Mammary epithelial cell (primary cell): ENCODE measurements at regions of chr5 and their contacts with region 1.

Region 1: DNA sequence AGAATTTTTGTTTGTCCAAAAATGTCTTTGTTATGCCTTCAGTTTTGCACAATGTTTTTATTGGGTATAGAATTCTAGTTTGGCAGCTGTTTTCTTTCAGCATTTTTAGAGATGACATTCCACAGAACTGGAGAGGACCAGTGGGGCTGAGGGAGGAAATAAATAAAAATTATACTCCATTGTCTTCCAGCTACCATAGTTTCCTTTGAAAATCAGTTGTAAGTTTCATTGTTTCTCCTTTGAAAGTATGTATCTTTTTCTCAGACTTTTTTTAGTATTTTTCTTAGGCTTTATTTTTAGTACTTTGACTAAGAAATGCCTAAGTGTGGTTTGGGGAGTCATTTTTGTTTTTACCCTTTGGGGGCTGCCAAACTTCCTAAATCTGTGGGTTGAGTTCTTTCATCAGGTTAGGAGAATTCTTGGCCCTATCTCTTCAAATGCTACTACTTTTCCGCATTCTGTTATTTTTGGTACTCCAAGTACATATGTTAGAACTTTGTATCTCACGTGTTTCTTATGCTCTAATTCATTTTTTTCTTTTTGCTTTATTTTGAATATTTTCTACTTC is 15.2 kb upstream of the FBLL1 start:
- DNase-seq: no peak
- H3K4me3 ChIP-seq: no peak overlapping the region
- H3K27ac ChIP-seq: no peak overlapping the region
- H3K4me1 ChIP-seq: no peaks in the 10 kb centered on the region
- H3K27me3 ChIP-seq: no peaks in the 10 kb centered on the region
- CTCF ChIP-seq: no peak

Region 2: DNA sequence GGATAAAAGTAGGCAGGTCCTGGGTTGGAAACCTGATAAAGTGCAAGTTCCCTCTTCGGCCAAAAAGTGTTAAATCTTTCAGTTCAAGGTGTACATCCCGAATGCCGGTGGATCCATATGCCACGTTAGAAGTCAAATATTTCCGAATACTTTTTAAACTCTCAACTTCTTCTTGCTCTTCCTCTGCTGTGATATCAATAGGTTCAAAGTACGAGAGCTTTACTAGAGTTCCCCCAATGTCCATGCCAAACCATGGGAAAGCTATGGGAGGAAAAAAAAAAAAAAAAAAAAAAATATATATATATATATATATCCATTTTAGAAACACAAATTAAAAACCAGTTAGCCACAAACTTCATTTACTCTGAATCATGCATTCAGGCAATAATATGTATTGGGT is 54.8 kb after region 1 on chr5:
- CTCF ChIA-PET with region 1: no interaction called
- dilution Hi-C with region 1: no loop called
- in situ Hi-C with region 1: no loop called
- intact Hi-C with region 1: loop called (anchors 5 kb)
- DNase-seq: no peak
- H3K4me3 ChIP-seq: no peak overlapping the region
- H3K27ac ChIP-seq: no peak overlapping the region
- H3K4me1 ChIP-seq: no peaks in the 10 kb centered on the region
- H3K27me3 ChIP-seq: no peaks in the 10 kb centered on the region
- CTCF ChIP-seq: no peak

Region 3: GRCh38 chr5:168860503-168860902 is 346.6 kb after region 1 on chr5:
- CTCF ChIA-PET with region 1: no interaction called
- dilution Hi-C with region 1: no loop called
- in situ Hi-C with region 1: no loop called
- intact Hi-C with region 1: no loop called
- DNase-seq: no peak
- H3K4me3 ChIP-seq: no peak overlapping the region
- H3K27ac ChIP-seq: no peak overlapping the region
- H3K4me1 ChIP-seq: no peaks in the 10 kb centered on the region
- H3K27me3 ChIP-seq: no peaks in the 10 kb centered on the region
- CTCF ChIP-seq: no peak